ENCODE measurements at regions of chr14 and their contacts with region 1.

Region 1: DNA sequence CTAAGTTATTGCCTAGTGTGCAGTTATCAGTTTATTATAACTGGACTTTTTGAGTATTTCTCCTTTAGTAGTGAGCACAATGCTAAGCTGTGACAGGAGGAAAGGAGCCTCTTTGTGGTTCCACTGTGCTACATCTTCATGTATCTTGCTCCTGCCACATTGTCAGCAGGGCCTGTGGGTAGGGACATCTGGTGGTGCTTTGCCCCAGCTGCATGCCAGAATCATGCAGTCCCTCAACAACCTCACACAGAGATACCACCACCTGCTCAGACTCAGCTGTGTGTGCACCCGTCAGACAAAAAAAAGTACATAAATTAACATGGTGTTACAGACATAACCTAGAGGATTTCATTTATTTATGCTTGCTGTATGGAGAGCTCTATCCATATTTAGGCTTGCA is 51.1 kb downstream of the MIS18BP1 start:
- DNase-seq: no peak
- H3K4me3 Mint-ChIP-seq: no peak overlapping the region
- H3K27ac Mint-ChIP-seq: peak overlapping the region; percentile 40
- H3K4me1 Mint-ChIP-seq: peaks cover 16% of the 10 kb centered on the region
- H3K27me3 Mint-ChIP-seq: no peaks in the 10 kb centered on the region

Region 2: GRCh38 chr14:44912041-44912869 is 289.6 kb before region 1 on chr14:
- intact Hi-C with region 1: loop called (anchors 1 kb)
- DNase-seq: no peak
- H3K4me3 Mint-ChIP-seq: peak overlapping the region; percentile 30
- H3K27ac Mint-ChIP-seq: no peak overlapping the region
- H3K4me1 Mint-ChIP-seq: peaks cover 3% of the 10 kb centered on the region
- H3K27me3 Mint-ChIP-seq: peaks cover 33% of the 10 kb centered on the region

Region 3: DNA sequence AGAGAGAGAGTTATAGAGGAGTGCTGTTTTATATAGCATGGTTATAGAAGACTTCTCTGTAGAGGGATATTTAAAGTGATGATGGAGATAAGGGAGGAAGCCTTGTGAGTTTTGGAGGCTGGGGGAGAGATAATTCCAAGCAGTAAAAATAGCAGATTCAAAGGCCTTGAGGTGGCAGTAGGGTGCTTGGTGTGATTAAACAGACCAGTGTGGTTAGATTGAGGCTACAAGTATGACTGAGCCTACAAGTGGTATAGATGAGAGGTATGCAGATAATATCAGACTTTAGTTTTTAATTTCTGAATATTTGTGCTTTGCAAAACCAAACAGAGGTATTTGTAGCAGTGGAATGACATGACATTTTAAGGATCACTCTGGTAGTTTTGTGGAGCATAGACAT is 45.8 kb before region 1 on chr14:
- intact Hi-C with region 1: loop called (anchors 5 kb)
- DNase-seq: no peak
- H3K4me3 Mint-ChIP-seq: no peak overlapping the region
- H3K27ac Mint-ChIP-seq: no peak overlapping the region
- H3K4me1 Mint-ChIP-seq: peaks cover 11% of the 10 kb centered on the region
- H3K27me3 Mint-ChIP-seq: no peaks in the 10 kb centered on the region

Region 4: GRCh38 chr14:45185100-45185814 is 16.6 kb before region 1 on chr14:
- intact Hi-C with region 1: no loop called
- DNase-seq: no peak
- H3K4me3 Mint-ChIP-seq: no peak overlapping the region
- H3K27ac Mint-ChIP-seq: no peak overlapping the region
- H3K4me1 Mint-ChIP-seq: peaks cover 2% of the 10 kb centered on the region
- H3K27me3 Mint-ChIP-seq: no peaks in the 10 kb centered on the region

Measured in activated T-helper 2 cell treated with anti-CD3 and anti-CD28 coated beads, Interferon-gamma antibody, Interleukin-2, Interleukin-4, amounts not matched to agents 10 μg/mL and 5 μg/mL and 100 μg/mL, durations not matched to agents 14 hours and 24 hours and 36 hours (primary cell).